ENCODE measurements at regions of chr5 and their contacts with region 1.

Region 1: GRCh38 chr5:141915881-141916336 is 7.8 kb upstream of the DELE1 start:
- DNase-seq: no peak
- ATAC-seq: no peak
- H3K4me3 ChIP-seq: no peak overlapping the region
- H3K4me3 Mint-ChIP-seq: no peak overlapping the region
- H3K27ac ChIP-seq: no peak overlapping the region
- H3K27ac Mint-ChIP-seq: no peak overlapping the region
- H3K4me1 ChIP-seq: peaks cover 0 to 11% of the 10 kb centered on the region in 2 experiments
- H3K4me1 Mint-ChIP-seq: peaks cover 11 to 15% (median 15%) of the 10 kb centered on the region in 3 donors
- H3K27me3 ChIP-seq: peaks cover 2 to 30% of the 10 kb centered on the region in 2 experiments
- H3K27me3 Mint-ChIP-seq: peaks cover 28 to 42% of the 10 kb centered on the region in 2 donors

Region 2: DNA sequence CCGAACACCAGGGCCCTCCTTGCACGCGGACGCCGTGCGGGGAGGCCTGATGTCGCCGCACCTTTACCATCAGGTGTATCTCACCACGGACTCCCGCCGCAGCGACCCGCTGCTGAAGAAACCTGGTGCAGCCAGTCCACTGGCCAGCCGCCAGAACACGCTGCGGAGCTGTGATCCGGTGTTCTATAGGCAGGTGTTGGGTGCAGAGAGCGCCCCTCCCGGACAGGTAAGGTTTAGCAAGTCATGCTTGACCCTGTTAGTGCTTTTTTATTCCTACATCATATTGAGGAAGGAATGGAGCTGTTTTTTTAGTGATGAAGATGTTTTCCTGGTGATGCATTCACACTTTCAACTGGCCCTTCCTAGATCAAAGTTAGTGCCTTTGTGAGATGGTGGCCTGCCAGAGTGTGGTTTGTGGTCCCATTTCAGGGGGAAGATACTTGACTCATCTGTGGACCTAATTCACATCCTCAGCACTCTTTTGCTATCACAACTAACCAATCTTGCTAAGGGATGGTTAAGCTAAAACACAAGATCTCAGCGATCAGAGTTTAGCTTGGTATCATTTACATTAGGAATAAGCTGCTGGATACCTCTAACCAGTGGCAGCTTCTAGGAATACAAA is 437.5 kb before region 1 on chr5:
- CTCF ChIA-PET with region 1: no interaction called
- POLR2A ChIA-PET with region 1: no interaction called
- DNase-seq: no peak
- ATAC-seq: no peak
- H3K4me3 ChIP-seq: no peak overlapping the region
- H3K4me3 Mint-ChIP-seq: peak overlapping the region in 1 of 3 donors; percentile 37
- H3K27ac ChIP-seq: no peak overlapping the region
- H3K27ac Mint-ChIP-seq: no peak overlapping the region
- H3K4me1 ChIP-seq: peaks cover 0 to 23% of the 10 kb centered on the region in 2 experiments
- H3K4me1 Mint-ChIP-seq: peaks cover 27 to 32% (median 29%) of the 10 kb centered on the region in 3 donors
- H3K27me3 ChIP-seq: peaks cover 29 to 55% of the 10 kb centered on the region in 2 experiments
- H3K27me3 Mint-ChIP-seq: peaks cover 57 to 86% of the 10 kb centered on the region in 2 donors

Region 3: DNA sequence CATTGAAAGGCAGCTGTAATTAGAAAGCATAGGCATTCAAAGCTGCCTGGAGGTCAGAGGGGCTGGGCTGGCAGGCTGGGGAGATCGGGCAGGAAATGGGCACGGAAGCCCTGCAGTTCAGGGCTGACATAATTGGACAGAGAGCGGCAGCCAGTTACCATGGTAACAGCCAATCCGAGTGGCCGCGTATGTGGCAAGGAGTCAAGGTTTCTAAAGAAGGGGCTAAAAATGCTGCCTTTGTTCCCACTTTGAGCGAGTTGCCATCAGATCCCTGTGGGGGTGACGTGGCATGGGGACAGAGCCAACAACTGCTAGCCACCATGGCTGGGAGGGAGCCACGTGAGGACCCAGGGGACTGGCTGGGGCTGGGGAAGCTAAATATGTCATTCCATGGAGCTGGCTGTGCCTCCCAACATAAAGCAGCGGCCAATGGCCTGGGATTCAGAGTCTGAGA is 148.0 kb after region 1 on chr5:
- CTCF ChIA-PET with region 1: no interaction called
- POLR2A ChIA-PET with region 1: interaction called in 1 of 2 experiments, 10 read pairs
- DNase-seq: peak in 32 of 35 experiments; percentile 10 to 53 (median 22)
- ATAC-seq: peak; percentile 50 to 89 (median 82)
- H3K4me3 ChIP-seq: no peak overlapping the region
- H3K4me3 Mint-ChIP-seq: peak overlapping the region in 2 of 3 donors; percentile 13 to 72
- H3K27ac ChIP-seq: no peak overlapping the region
- H3K27ac Mint-ChIP-seq: peak overlapping the region; percentile 21 to 65
- H3K4me1 ChIP-seq: peaks cover 0 to 15% of the 10 kb centered on the region in 2 experiments
- H3K4me1 Mint-ChIP-seq: peaks cover 12 to 15% (median 15%) of the 10 kb centered on the region in 3 donors
- H3K27me3 ChIP-seq: peaks cover 0 to 4% of the 10 kb centered on the region in 2 experiments
- H3K27me3 Mint-ChIP-seq: no peaks in the 10 kb centered on the region